ENCODE measurements at regions of chr1 and their contacts with region 1.

Region 1: DNA sequence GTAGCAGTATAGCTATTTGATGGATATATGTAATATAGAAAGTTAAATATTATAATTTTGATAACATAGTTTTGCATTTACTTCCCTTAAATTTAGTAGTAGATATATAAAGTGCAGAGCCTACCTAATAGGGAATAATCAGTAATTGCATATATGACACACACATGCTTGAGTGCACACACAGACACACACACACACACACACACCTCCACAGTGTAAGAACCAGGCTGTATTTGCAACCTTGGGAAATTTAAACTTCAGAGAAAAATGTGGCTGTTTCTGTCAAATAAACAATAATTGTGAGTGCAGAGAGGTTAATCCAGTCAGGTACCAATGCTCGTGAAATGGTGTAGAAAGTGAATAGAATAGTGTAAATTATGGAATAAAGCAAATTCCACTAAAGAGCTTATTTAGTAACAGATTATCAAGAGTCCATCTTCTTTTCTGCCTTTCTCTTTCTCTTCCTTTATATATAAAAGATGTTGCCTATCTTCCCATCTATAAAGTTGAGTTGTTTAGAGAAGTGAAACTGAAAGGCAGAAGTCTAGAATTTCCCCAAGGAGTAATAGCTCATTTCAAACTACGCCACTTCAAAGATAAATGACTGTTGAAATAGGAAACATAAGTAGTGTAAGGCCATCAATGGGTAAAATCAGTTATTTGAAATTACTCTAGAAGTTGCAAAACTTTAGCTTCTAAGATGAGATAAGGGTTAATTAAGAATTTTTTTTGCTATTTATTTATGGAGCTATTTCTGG is 273.7 kb downstream of the SRGAP2C start:
- DNase-seq: peak; percentile 58
- ATAC-seq: peak; percentile 98
- H3K4me3 ChIP-seq: no peak overlapping the region
- H3K27ac ChIP-seq: no peak overlapping the region
- H3K4me1 ChIP-seq: no peaks in the 10 kb centered on the region
- H3K27me3 ChIP-seq: no peaks in the 10 kb centered on the region
- CTCF ChIP-seq: no peak
- EP300 ChIP-seq: peak; percentile 79 to 94
- POLR2A ChIP-seq: no peak
- RAD21 ChIP-seq: no peak

Region 2: DNA sequence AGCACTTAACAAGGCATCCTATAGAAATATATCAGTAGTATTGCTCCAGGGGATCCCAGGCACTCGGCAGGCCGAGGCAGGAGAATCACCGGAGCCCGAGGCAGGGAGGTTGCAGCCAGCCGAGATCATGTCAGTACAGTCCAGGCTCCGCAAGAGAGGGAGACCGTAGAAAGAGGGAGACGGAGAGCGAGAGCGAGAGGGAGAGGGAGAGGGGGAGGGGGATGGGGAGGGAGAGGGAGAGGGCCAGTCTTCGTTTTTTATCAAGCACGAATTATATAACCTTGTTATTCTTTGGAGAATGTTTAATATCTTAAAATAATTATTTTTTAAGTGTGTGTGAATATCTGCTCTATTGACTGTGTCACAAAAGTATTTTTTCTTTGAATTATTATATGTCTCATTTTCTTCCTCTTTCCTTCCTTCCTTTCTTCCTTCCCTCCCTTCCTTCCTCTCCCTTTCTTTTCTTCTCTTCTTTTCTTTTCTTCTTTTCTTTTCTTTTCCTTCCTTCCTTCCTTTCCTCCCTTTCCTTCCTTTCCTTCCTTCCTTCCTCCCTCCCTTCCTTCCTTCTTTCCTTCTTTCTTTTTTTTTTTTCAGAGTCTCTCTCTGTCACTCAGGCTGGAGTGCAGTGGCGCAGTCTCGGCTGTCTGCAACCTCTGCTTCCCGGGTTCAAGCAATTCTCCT is 40.0 kb before region 1 on chr1:
- CTCF ChIA-PET with region 1: no interaction called
- POLR2A ChIA-PET with region 1: no interaction called
- RAD21 ChIA-PET with region 1: no interaction called
- SMC1A ChIA-PET with region 1: no interaction called
- in situ Hi-C with region 1: no loop called
- intact Hi-C with region 1: loop called (anchors 10 kb)
- DNase-seq: no peak
- ATAC-seq: no peak
- H3K4me3 ChIP-seq: no peak overlapping the region
- H3K27ac ChIP-seq: no peak overlapping the region
- H3K4me1 ChIP-seq: no peaks in the 10 kb centered on the region
- H3K27me3 ChIP-seq: no peaks in the 10 kb centered on the region
- CTCF ChIP-seq: no peak
- EP300 ChIP-seq: no peak
- POLR2A ChIP-seq: no peak
- RAD21 ChIP-seq: no peak

Region 3: GRCh38 chr1:121566346-121566745 is 107.9 kb after region 1 on chr1:
- CTCF ChIA-PET with region 1: no interaction called
- POLR2A ChIA-PET with region 1: no interaction called
- RAD21 ChIA-PET with region 1: no interaction called
- SMC1A ChIA-PET with region 1: no interaction called
- in situ Hi-C with region 1: no loop called
- intact Hi-C with region 1: no loop called
- DNase-seq: no peak
- ATAC-seq: no peak
- H3K4me3 ChIP-seq: no peak overlapping the region
- H3K27ac ChIP-seq: no peak overlapping the region
- H3K4me1 ChIP-seq: no peaks in the 10 kb centered on the region
- H3K27me3 ChIP-seq: no peaks in the 10 kb centered on the region
- CTCF ChIP-seq: no peak
- EP300 ChIP-seq: no peak
- POLR2A ChIP-seq: no peak
- RAD21 ChIP-seq: no peak